CD4-positive, alpha-beta memory T cell (primary cell): ENCODE measurements at regions of chr6 and their contacts with region 1.

Region 1: GRCh38 chr6:391559-392440 is at the start of gene IRF4:
- DNase-seq: peak in 3 of 5 donors; percentile 19 to 26 (median 22)
- H3K4me3 ChIP-seq: peak within 1 kb of the TSS; percentile 23 to 63
- H3K4me3 Mint-ChIP-seq: peak within 1 kb of the TSS; percentile 92 to 96 (median 94)
- H3K27ac ChIP-seq: peak within 1 kb of the TSS; percentile 32
- H3K27ac Mint-ChIP-seq: peak within 1 kb of the TSS; percentile 57 to 90 (median 80)
- H3K4me1 ChIP-seq: peaks cover 36% of the 10 kb centered on the region
- H3K4me1 Mint-ChIP-seq: peaks cover 24 to 41% (median 27%) of the 10 kb centered on the region in 4 donors
- H3K27me3 ChIP-seq: no peaks in the 10 kb centered on the region
- H3K27me3 Mint-ChIP-seq: peaks cover 4 to 15% of the 10 kb centered on the region in 2 donors
- total RNA-seq, gene IRF4: 8.5 to 8.6 TPM

Region 2: GRCh38 chr6:291697-292505 is 99.9 kb before region 1 on chr6 and contains the start of gene DUSP22:
- CTCF ChIA-PET with region 1: no interaction called
- POLR2A ChIA-PET with region 1: interaction called, 3 read pairs
- intact Hi-C with region 1: loop called (anchors 2 kb)
- DNase-seq: peak; percentile 70 to 90 (median 78)
- H3K4me3 ChIP-seq: peak within 1 kb of the TSS; percentile 59 to 63
- H3K4me3 Mint-ChIP-seq: peak within 1 kb of the TSS; percentile 87 to 98 (median 94)
- H3K27ac ChIP-seq: peak within 1 kb of the TSS; percentile 75
- H3K27ac Mint-ChIP-seq: peak within 1 kb of the TSS; percentile 93 to 98 (median 95)
- H3K4me1 ChIP-seq: peaks cover 26% of the 10 kb centered on the region
- H3K4me1 Mint-ChIP-seq: peaks cover 25 to 56% (median 37%) of the 10 kb centered on the region in 4 donors
- H3K27me3 ChIP-seq: no peaks in the 10 kb centered on the region
- H3K27me3 Mint-ChIP-seq: no peaks in the 10 kb centered on the region
- total RNA-seq, gene DUSP22: 43.4 to 49.4 TPM

Region 3: GRCh38 chr6:474453-475185 is 82.8 kb after region 1 on chr6:
- CTCF ChIA-PET with region 1: interaction called, 3 read pairs
- POLR2A ChIA-PET with region 1: interaction called, 10 read pairs
- intact Hi-C with region 1: no loop called
- DNase-seq: peak; percentile 66 to 77 (median 68)
- H3K4me3 ChIP-seq: peak overlapping the region; percentile 32 to 38
- H3K4me3 Mint-ChIP-seq: peak overlapping the region; percentile 30 to 80 (median 75)
- H3K27ac ChIP-seq: no peak overlapping the region
- H3K27ac Mint-ChIP-seq: peak overlapping the region in 5 of 7 donors; percentile 22 to 88 (median 59)
- H3K4me1 ChIP-seq: peaks cover 34% of the 10 kb centered on the region
- H3K4me1 Mint-ChIP-seq: peaks cover 33 to 44% (median 37%) of the 10 kb centered on the region in 4 donors
- H3K27me3 ChIP-seq: no peaks in the 10 kb centered on the region
- H3K27me3 Mint-ChIP-seq: no peaks in the 10 kb centered on the region

Region 4: DNA sequence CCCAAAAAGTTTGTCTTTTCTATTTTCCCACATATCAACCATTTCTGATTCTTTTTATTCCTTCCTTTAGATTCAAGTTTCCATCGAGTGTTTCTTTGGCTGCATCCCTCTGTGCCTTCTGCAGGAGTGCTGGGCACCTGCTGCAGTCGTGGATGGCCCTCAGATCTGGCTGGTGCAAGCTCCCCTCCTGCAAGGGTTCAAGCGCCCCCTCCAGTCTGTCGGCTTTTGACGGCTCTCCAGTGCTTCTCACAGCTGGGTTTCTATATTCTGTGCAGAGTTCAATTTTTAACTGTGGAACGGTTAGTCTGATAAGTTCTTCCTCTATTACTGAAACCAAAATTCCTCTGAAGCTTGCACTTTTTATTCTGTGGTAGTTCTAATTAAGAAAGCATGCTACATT is 133.0 kb after region 1 on chr6:
- CTCF ChIA-PET with region 1: interaction called, 10 read pairs
- POLR2A ChIA-PET with region 1: interaction called, 3 read pairs
- intact Hi-C with region 1: loop called (anchors 1 kb)
- DNase-seq: no peak
- H3K4me3 ChIP-seq: no peak overlapping the region
- H3K4me3 Mint-ChIP-seq: no peak overlapping the region
- H3K27ac ChIP-seq: no peak overlapping the region
- H3K27ac Mint-ChIP-seq: peak overlapping the region in 6 of 7 donors; percentile 44 to 90 (median 69)
- H3K4me1 ChIP-seq: peaks cover 6% of the 10 kb centered on the region
- H3K4me1 Mint-ChIP-seq: peaks cover 6 to 12% (median 10%) of the 10 kb centered on the region in 4 donors
- H3K27me3 ChIP-seq: no peaks in the 10 kb centered on the region
- H3K27me3 Mint-ChIP-seq: no peaks in the 10 kb centered on the region

Region 5: GRCh38 chr6:692855-693722 is 301.3 kb after region 1 on chr6 and contains the start of gene EXOC2:
- CTCF ChIA-PET with region 1: no interaction called
- POLR2A ChIA-PET with region 1: no interaction called
- intact Hi-C with region 1: loop called (anchors 10 kb)
- DNase-seq: peak; percentile 80 to 83 (median 82)
- H3K4me3 ChIP-seq: peak within 1 kb of the TSS; percentile 81 to 89
- H3K4me3 Mint-ChIP-seq: peak within 1 kb of the TSS; percentile 94 to 98 (median 96)
- H3K27ac ChIP-seq: peak within 1 kb of the TSS; percentile 77
- H3K27ac Mint-ChIP-seq: peak within 1 kb of the TSS; percentile 93 to 97 (median 94)
- H3K4me1 ChIP-seq: peaks cover 35% of the 10 kb centered on the region
- H3K4me1 Mint-ChIP-seq: peaks cover 25 to 50% (median 29%) of the 10 kb centered on the region in 4 donors
- H3K27me3 ChIP-seq: no peaks in the 10 kb centered on the region
- H3K27me3 Mint-ChIP-seq: no peaks in the 10 kb centered on the region
- total RNA-seq, gene EXOC2: 44.6 to 47.6 TPM

Region 6: DNA sequence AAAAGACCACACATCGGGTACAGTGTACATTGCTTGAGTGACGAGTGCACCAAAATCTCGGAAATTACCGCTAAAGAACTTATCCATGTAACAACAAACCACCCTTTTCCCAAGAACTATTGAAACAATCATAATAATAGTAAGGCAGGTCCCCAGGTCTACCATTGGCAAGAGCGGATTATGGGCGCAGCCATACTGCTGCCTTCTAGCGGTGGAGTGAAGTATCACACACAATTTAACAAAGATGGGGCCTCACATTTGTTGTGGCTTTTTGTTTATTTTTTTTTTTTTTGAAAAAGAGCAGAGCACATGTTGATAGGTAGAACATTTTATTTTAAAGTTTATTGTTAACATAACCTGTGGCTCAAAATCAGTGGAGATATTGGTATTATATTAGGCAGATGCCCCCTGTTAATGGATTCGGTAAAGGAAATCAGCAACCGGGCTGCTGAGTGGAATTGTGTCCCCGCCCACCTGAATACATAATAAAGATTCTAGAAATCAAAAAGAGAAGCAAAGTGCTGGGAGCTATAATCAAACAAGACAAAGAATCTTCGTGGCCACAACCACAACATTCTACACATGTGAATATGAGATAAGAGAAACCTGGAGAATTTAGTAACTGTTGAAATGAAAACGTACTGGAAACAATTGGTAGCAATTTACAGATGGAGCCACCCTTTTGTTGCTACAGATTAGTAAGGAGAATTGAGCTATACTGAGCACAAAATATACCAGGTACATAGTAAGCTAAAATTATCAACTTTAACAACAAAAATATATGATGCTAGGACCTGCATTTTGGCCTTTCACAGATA is 395.4 kb after region 1 on chr6:
- CTCF ChIA-PET with region 1: interaction called, 3 read pairs
- POLR2A ChIA-PET with region 1: no interaction called
- intact Hi-C with region 1: loop called (anchors 5 kb)
- DNase-seq: peak in 4 of 5 donors; percentile 9 to 22 (median 14)
- H3K4me3 ChIP-seq: no peak overlapping the region
- H3K4me3 Mint-ChIP-seq: no peak overlapping the region
- H3K27ac ChIP-seq: no peak overlapping the region
- H3K27ac Mint-ChIP-seq: no peak overlapping the region
- H3K4me1 ChIP-seq: peaks cover 5% of the 10 kb centered on the region
- H3K4me1 Mint-ChIP-seq: peaks cover 6 to 8% (median 7%) of the 10 kb centered on the region in 4 donors
- H3K27me3 ChIP-seq: peaks cover 6% of the 10 kb centered on the region
- H3K27me3 Mint-ChIP-seq: peaks cover 5 to 7% of the 10 kb centered on the region in 2 donors

Region 7: DNA sequence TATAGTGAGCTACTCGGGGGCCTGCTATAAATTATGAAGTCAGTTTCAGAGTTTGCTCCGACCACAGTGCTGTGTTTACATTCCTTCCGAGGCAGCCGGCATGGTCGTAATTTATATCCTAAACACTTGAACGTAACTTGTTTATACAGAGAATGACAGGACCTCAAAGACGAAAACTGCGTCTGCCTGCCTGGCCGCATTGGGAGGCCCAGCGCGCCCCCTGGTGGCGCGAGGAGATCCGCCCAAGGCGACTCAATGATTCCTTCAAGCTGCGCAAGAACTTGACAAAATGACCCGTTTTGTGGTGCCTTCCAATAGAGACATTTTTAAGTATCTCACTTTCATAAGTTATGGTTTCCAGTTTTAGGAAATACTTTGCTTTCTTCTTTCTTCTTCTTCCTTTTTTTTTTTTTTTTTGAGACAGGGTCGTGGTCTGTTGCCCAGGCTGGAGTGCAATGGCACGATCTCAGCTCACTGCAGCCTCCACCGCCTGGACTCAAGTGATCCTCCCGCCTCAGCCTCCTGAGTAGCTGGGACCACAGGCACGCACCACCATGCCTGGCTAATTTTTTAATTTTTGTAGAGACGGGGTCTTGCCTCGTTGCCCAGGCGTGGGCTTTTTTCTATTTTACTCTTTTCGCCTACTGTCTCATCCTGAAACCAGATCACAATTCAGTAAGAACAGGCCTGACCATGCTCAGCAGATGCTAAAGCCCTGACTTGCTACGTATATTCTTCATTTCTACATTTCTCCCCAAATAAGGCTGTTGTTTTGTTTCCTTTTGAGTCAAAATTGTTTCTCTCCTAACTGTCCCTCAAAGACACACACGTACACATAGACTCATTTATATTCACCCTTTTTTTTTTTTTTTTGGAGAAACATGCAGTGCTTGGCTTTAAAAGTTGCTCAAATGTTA is 1005.4 kb after region 1 on chr6:
- CTCF ChIA-PET with region 1: no interaction called
- POLR2A ChIA-PET with region 1: no interaction called
- intact Hi-C with region 1: loop called (anchors 1 kb)
- DNase-seq: peak; percentile 54 to 63 (median 60)
- H3K4me3 ChIP-seq: no peak overlapping the region
- H3K4me3 Mint-ChIP-seq: peak overlapping the region in 5 of 8 donors; percentile 0 to 62 (median 31)
- H3K27ac ChIP-seq: no peak overlapping the region
- H3K27ac Mint-ChIP-seq: peak overlapping the region in 2 of 7 donors; percentile 30 to 37
- H3K4me1 ChIP-seq: no peaks in the 10 kb centered on the region
- H3K4me1 Mint-ChIP-seq: peaks cover 5 to 18% (median 10%) of the 10 kb centered on the region in 4 donors
- H3K27me3 ChIP-seq: peaks cover 24% of the 10 kb centered on the region
- H3K27me3 Mint-ChIP-seq: peaks cover 42 to 49% of the 10 kb centered on the region in 2 donors

Region 8: DNA sequence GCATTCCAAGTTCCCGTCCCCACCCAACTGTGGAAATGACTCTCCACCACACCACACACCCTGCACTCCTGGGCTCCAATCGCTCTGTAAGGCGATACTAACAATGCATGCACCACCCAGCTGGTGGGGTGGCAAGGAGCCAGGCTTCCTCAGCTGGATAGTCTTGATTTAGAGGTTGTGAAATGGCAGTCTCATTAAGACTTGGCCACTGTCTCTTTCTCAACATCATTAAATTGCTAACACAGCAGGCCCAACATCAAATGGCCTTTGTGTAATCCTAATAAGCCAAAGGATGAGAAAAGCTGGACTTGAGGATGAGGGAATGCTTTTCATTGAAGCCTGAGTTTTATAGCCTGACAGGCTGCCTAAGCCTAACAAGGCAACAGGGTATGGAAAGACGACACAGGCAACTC is 1629.9 kb after region 1 on chr6:
- CTCF ChIA-PET with region 1: no interaction called
- POLR2A ChIA-PET with region 1: no interaction called
- intact Hi-C with region 1: no loop called
- DNase-seq: no peak
- H3K4me3 ChIP-seq: no peak overlapping the region
- H3K4me3 Mint-ChIP-seq: no peak overlapping the region
- H3K27ac ChIP-seq: no peak overlapping the region
- H3K27ac Mint-ChIP-seq: no peak overlapping the region
- H3K4me1 ChIP-seq: no peaks in the 10 kb centered on the region
- H3K4me1 Mint-ChIP-seq: peaks cover 0 to 11% (median 4%) of the 10 kb centered on the region in 4 donors
- H3K27me3 ChIP-seq: no peaks in the 10 kb centered on the region
- H3K27me3 Mint-ChIP-seq: no peaks in the 10 kb centered on the region